Heart left ventricle (tissue), 16 donors: ENCODE measurements at regions of chrX and their contacts with region 1.

Region 1: DNA sequence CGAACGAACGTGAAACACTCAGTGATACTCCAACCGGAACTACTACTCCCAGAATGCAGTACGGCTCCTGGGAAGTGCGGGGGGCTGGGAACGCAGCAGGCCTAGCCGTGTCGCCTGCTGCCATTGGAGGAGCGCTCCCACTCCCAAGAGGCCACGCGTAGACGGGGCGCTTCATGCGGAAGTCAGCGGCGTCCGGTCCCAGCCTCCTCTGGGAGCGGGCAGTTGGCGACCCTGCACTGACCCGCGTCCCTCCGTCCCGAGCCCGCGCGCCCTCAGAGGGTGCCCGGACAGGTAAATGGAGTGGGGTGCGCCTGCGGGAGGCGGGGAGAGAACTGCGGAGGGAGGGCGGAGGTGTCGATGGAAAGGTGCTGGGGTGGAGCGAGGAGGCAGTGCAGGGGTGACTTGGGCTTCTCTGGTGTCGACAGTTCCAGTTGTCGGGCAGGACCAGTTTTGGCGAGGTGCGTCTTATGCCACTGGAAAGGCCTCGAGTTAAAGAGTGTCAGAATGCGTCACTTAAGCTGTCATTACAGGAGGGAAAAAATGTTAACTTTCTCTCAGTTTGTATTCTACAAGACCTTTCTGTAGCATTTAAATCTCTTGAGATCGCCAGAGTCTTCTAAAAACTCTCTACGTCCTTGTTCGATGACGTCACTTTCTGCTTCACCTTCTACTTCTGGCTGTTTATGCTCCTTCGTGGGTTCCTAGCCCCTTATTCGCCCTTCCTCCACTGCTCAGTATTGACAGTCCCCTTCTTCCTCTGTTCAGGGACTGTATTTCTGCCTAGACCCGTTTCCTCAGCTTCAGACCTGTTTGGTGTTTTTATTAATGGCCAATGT is at the start of gene VAMP7:
- DNase-seq: peak; percentile 87 to 93 (median 91)
- ATAC-seq: peak; percentile 99 to 100 (median 100)
- H3K4me3 ChIP-seq: peak within 1 kb of the TSS; percentile 30 to 94 (median 74)
- H3K27ac ChIP-seq: peak within 1 kb of the TSS in 11 of 12 donors; percentile 29 to 86 (median 77)
- H3K4me1 ChIP-seq: peaks cover 0 to 19% (median 3%) of the 10 kb centered on the region in 12 donors
- H3K27me3 ChIP-seq: no peaks in the 10 kb centered on the region
- CTCF ChIP-seq: no peak
- POLR2A ChIP-seq: peak in 1 of 2 donors; percentile 73
- total RNA-seq, gene VAMP7: 18.5 to 28.8 (median 24.3) TPM

Region 2: GRCh38 chrX:155179346-155179986 is 701.9 kb before region 1 on chrX:
- intact Hi-C with region 1: no loop called
- DNase-seq: no peak
- ATAC-seq: no peak
- H3K4me3 ChIP-seq: no peak overlapping the region
- H3K27ac ChIP-seq: no peak overlapping the region
- H3K4me1 ChIP-seq: no peaks in the 10 kb centered on the region
- H3K27me3 ChIP-seq: no peaks in the 10 kb centered on the region
- CTCF ChIP-seq: peak in 2 of 12 donors; percentile 14 to 20
- POLR2A ChIP-seq: no peak

Region 3: DNA sequence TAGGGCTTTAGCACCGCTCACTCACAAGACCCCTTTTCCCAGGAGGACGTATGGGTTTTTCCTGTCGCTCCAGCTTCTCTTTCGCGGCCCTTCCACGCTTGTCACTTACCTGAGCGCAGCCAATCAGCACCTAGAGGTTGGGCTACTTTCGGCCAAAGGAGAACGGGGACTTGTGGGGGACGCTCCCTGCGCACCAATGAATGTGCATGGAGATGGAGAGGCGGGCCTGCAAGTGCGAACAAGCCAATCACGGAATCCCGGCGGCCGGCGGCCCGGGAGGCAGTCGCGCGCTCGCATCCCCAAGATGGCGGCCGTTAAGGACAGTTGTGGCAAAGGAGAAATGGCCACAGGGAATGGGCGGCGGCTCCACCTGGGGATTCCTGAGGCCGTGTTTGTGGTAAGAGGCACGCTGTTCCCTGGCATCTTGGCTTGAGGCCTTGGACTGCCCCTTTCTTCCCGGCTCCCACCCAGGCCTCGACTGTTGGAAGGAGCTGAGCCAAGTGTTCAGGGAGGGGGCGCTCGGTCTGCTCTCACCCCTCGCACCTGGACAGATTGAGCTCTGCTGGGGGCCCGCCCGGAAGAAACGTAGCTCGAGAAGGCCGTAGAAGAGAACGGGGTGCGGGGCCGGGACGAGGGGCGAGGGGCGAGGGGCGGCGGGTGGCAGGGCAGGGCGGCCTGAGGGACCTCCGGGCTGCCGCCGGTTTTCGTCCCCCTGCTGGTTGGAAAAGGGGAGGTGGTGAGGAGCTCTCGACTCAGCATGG is 665.0 kb before region 1 on chrX and contains the start of gene VBP1:
- intact Hi-C with region 1: loop called in 1 of 10 experiments (anchors 5 kb)
- DNase-seq: peak; percentile 92 to 94 (median 92)
- ATAC-seq: peak; percentile 99 to 100 (median 99)
- H3K4me3 ChIP-seq: peak within 1 kb of the TSS; percentile 47 to 88 (median 74)
- H3K27ac ChIP-seq: peak within 1 kb of the TSS; percentile 79 to 92 (median 88)
- H3K4me1 ChIP-seq: peaks cover 0 to 27% (median 5%) of the 10 kb centered on the region in 12 donors
- H3K27me3 ChIP-seq: no peaks in the 10 kb centered on the region
- CTCF ChIP-seq: peak in 10 of 12 donors; percentile 26 to 59 (median 46)
- POLR2A ChIP-seq: no peak
- total RNA-seq, gene VBP1: 39.6 to 82.8 (median 72.3) TPM